Calu3 (cell line): ENCODE measurements at regions of chr17 and their contacts with region 1.

Region 1: GRCh38 chr17:46002311-46002972 is 3.4 kb downstream of the STH start:
- DNase-seq: peak; percentile 87
- H3K4me3 Mint-ChIP-seq: no peak overlapping the region
- H3K27ac Mint-ChIP-seq: no peak overlapping the region
- H3K4me1 Mint-ChIP-seq: peaks cover 19% of the 10 kb centered on the region
- H3K27me3 Mint-ChIP-seq: peaks cover 14% of the 10 kb centered on the region
- CTCF ChIP-seq: peak; percentile 99

Region 2: GRCh38 chr17:45828628-45829027 is 173.8 kb before region 1 on chr17:
- CTCF ChIA-PET with region 1: no interaction called
- intact Hi-C with region 1: no loop called
- DNase-seq: no peak
- H3K4me3 Mint-ChIP-seq: no peak overlapping the region
- H3K27ac Mint-ChIP-seq: no peak overlapping the region
- H3K4me1 Mint-ChIP-seq: no peaks in the 10 kb centered on the region
- H3K27me3 Mint-ChIP-seq: peaks cover 91% of the 10 kb centered on the region
- CTCF ChIP-seq: no peak

Region 3: DNA sequence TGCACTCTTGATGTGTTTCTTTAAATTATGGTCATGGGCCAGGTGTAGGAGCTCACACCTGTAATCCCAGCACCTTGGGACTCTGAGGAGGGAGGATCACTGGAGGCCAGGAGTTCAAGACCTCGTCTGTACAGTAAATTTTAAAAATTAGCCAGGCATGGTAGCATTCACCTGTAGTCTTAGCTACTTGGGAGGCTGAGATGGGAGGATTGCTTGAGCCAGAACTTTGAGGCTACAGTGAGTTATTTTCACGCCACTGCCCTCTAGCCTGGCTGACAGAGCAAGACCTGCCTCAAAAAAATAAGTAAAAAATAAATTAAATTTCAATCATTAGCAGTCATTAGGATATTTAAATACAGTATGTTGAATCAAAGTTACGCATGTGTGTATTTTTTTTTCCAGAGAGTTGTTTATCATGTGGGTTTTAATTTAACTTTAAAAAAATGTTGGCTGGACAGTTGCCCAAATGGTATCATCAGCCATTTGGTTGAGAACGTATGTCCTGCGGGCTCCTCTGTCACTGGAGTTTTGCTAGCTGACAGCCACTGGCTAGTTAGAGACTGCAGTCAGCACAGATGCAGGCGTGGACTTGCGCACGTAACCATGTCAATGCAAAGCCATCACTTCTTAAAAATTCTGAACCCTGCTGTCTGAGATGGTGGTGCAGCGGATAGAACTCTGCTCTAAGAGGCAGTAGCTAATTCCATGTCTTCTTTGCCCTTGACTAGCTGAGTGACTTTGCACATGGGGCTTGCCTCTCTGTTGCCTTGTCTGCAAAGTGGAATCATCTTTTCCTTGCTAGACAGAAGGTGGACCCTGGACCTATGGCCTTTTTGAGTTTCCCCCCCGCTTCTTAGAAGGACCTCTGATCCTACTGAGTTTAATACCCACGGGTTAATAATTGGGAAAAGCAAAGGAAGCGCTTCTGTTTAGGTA is 68.1 kb before region 1 on chr17:
- CTCF ChIA-PET with region 1: no interaction called
- intact Hi-C with region 1: no loop called
- DNase-seq: no peak
- H3K4me3 Mint-ChIP-seq: no peak overlapping the region
- H3K27ac Mint-ChIP-seq: no peak overlapping the region
- H3K4me1 Mint-ChIP-seq: no peaks in the 10 kb centered on the region
- H3K27me3 Mint-ChIP-seq: peaks cover 79% of the 10 kb centered on the region
- CTCF ChIP-seq: no peak

Region 4: DNA sequence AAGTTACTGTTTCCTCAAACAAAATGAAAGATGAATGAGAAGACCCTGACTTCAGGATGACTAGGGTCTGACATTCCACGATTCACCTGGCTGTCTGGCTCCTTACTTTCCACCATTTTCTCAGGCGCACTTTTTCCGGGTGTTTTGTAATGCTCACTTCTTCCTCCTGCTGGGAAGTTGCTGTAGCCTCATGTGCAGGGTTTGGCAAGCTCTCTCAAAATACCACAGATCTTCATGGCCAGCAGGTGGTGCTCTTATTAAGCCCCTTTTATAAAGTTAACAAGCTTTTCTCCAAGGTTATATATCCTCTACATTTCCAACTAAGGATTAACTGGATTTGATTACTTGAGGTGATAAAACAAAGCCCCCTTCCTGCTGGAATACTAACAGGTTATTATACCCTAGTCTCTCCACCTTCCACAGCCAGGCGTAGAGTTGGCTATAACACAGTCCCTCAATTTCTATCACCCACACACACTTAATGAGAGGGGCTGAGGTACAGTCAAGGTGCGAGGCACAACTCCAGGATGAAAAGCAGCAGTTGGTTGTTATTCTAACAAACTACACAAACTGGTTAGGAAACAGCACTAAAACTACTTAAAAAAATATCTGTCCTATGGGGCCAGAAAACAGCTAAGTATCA is 42.0 kb after region 1 on chr17:
- CTCF ChIA-PET with region 1: interaction called, 16 read pairs
- intact Hi-C with region 1: loop called (anchors 5 kb)
- DNase-seq: peak; percentile 83
- H3K4me3 Mint-ChIP-seq: no peak overlapping the region
- H3K27ac Mint-ChIP-seq: peak overlapping the region; percentile 11
- H3K4me1 Mint-ChIP-seq: peaks cover 17% of the 10 kb centered on the region
- H3K27me3 Mint-ChIP-seq: no peaks in the 10 kb centered on the region
- CTCF ChIP-seq: peak; percentile 93